ENCODE measurements at regions of chr3 and their contacts with region 1.

Region 1: DNA sequence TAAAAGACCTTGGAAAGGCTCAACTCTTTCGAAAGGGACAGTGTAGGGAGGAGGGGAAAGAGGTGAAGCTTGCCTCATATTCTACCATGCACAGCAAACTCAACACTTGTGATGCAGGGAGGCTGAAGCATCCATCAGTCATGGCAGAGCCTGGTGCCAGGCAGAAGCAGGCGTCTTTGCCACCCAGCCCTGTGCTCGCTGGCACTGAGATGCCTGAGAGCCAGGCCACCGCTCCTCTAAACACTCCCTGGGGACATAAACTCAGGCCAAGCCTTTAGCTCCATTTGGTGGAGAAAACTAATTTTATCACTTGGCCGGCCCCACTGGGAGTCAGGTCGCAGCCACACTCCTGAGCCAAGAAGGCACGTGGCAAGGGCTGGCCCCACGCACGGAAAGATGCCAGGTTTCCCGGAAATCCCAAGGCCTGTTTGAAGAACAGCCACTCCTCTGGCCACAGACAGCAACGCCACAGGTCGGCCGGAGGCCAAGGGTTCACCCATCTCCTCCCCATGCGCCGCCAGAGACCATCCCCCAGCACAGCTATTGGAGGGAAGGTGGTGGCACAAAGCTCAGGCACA is 30.7 kb downstream of the XXYLT1 start:
- DNase-seq: peak in 3 of 5 donors; percentile 54 to 76 (median 62)
- ATAC-seq: peak; percentile 44 to 78 (median 59)
- H3K4me3 ChIP-seq: no peak overlapping the region
- H3K27ac ChIP-seq: peak overlapping the region in 4 of 12 donors; percentile 3 to 89 (median 24)
- H3K4me1 ChIP-seq: peaks cover 0 to 27% (median 15%) of the 10 kb centered on the region in 12 donors
- H3K27me3 ChIP-seq: no peaks in the 10 kb centered on the region
- CTCF ChIP-seq: no peak
- POLR2A ChIP-seq: no peak

Region 2: DNA sequence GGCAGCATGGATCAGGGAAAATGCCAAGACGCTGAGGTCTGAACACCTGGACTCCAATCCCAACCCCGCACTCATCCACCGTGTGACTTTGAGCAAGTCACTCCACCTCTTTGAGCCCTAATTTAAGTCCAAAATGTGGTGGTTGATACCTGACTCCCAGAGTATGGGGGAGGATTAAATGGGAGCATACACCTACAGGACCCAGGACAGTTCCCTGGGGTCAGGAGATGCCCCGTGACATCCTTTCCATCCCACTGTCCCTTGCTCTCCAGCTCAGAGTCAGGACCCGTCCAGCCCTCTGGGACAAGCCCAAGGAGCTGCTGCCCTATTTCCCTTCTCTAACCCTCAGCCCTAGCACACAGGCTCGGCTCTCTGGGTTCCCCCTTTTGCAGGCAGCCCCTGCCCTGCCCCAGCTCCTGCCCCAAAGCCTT is 245.7 kb before region 1 on chr3:
- intact Hi-C with region 1: no loop called
- DNase-seq: peak in 1 of 5 donors; percentile 1
- ATAC-seq: no peak
- H3K4me3 ChIP-seq: no peak overlapping the region
- H3K27ac ChIP-seq: no peak overlapping the region
- H3K4me1 ChIP-seq: no peaks in the 10 kb centered on the region
- H3K27me3 ChIP-seq: no peaks in the 10 kb centered on the region
- CTCF ChIP-seq: no peak
- POLR2A ChIP-seq: no peak

Region 3: DNA sequence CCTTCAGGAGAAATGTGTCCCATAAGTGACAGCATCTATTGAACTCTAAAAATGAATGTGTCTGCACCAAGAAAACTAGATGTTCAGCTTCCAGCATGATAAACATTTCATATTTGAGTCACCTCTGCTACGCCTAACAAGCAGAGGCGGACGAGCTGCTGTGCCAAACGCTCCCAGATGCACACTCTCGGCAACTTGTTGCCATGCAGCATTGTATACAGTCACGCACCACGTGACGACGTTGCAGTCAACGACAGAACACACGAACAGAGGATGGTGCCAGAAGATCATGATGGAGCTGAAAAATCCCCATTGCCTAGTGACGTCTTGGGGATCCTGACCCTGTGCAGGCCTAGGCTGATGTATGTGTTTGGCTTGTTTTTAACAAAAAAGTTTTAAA is 106.8 kb before region 1 on chr3:
- intact Hi-C with region 1: loop called in 1 of 10 experiments (anchors 10 kb)
- DNase-seq: no peak
- ATAC-seq: peak in 3 of 4 donors; percentile 56 to 70 (median 67)
- H3K4me3 ChIP-seq: no peak overlapping the region
- H3K27ac ChIP-seq: peak overlapping the region in 1 of 12 donors; percentile 65
- H3K4me1 ChIP-seq: peaks cover 0 to 3% (median 0%) of the 10 kb centered on the region in 12 donors
- H3K27me3 ChIP-seq: no peaks in the 10 kb centered on the region
- CTCF ChIP-seq: no peak
- POLR2A ChIP-seq: no peak